HCT116 (cell line): ENCODE measurements at regions of chr4 and their contacts with region 1.

Region 1: GRCh38 chr4:81069706-81070331 is 39.3 kb downstream of the BMP3 start:
- DNase-seq: peak; percentile 86
- ATAC-seq: peak; percentile 98
- H3K4me3 ChIP-seq: no peak overlapping the region
- H3K27ac ChIP-seq: no peak overlapping the region
- H3K4me1 ChIP-seq: no peaks in the 10 kb centered on the region
- H3K27me3 ChIP-seq: peaks cover 27% of the 10 kb centered on the region
- CTCF ChIP-seq: peak; percentile 86 to 94 (median 92)
- POLR2A ChIP-seq: no peak
- RAD21 ChIP-seq: peak; percentile 88

Region 2: DNA sequence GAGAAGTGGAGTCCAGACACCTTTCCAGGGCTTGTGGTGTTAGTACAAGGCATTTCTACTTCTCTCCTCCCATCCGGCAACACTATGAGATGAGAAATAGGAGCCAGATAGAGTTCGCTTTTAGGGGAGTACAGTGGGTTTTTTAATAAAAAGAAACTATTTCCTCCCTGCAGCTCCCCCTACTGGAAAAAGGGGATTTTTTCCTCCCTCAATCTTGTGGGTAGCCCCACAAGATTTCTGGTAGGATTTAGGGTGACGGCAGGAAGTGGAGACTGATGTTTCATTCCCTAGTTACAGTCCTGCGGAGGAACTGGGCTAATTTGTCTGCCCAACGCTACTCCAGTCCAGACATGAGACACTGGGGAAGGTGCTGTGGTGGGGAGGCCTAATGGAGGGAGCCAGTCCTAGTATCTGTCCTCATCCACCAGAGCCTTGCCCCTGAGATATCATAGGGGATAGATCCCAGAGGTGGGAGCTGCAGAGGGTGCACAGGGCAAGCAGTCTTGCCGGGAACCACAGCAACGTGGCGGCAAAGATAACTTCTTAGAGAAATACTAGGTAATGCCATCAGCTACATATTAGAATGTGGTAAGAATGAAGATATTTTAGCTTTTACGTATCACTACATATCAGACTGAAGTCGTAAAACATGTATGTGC is 190.8 kb after region 1 on chr4:
- CTCF ChIA-PET with region 1: interaction called, 18 read pairs
- POLR2A ChIA-PET with region 1: no interaction called
- RAD21 ChIA-PET with region 1: no interaction called
- intact Hi-C with region 1: loop called (anchors 1 kb)
- DNase-seq: no peak
- ATAC-seq: peak; percentile 62
- H3K4me3 ChIP-seq: no peak overlapping the region
- H3K27ac ChIP-seq: no peak overlapping the region
- H3K4me1 ChIP-seq: no peaks in the 10 kb centered on the region
- H3K27me3 ChIP-seq: no peaks in the 10 kb centered on the region
- CTCF ChIP-seq: peak; percentile 17 to 63 (median 56); a peak in 5 of 6 replicates
- POLR2A ChIP-seq: no peak
- RAD21 ChIP-seq: peak; percentile 40

Region 3: DNA sequence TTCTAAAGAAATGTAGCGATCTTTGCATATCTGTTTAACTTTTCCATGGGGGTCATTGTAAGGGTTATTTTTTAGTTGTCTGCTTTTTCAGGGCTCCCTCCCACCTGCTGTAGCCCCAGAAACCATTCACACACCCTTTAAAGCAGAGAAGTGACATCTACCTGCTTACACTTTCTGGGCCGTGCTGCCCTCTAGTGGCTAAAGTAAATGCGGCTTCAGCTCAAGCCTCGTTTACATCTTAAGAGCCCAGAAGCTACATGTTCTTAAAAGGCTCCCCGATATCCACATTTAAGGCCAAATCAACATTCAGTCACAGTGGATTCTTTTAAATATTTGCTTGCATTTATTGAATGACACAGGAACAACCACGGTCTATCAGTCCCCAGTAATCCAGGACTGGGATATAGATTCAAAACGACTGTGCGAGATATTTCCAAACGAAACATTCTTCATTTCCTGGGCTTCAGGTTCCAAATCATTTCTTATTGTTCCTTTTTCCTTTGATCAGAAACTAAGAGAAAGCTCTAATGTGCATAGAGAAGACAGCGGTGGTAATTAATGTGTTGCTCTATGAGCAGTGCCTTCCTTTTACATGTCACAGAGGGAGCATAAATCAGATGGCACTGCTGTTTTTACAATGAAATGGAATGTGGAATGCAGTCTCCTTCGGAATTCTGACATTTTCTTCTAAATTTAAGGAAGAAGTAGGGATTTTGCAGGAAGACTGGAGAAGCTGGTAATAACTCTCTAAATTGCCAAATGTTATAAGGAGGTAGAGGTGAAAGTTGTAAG is 282.0 kb after region 1 on chr4:
- CTCF ChIA-PET with region 1: interaction called, 73 read pairs
- POLR2A ChIA-PET with region 1: no interaction called
- RAD21 ChIA-PET with region 1: interaction called, 3 to 7 read pairs
- intact Hi-C with region 1: loop called (anchors 1 kb)
- DNase-seq: peak; percentile 70
- ATAC-seq: peak; percentile 91
- H3K4me3 ChIP-seq: no peak overlapping the region
- H3K27ac ChIP-seq: no peak overlapping the region
- H3K4me1 ChIP-seq: no peaks in the 10 kb centered on the region
- H3K27me3 ChIP-seq: peaks cover 26% of the 10 kb centered on the region
- CTCF ChIP-seq: peak; percentile 71 to 95 (median 89); a peak in 5 of 6 replicates
- POLR2A ChIP-seq: no peak
- RAD21 ChIP-seq: peak; percentile 84